ENCODE measurements at regions of chr7 and their contacts with region 1.

Region 1: DNA sequence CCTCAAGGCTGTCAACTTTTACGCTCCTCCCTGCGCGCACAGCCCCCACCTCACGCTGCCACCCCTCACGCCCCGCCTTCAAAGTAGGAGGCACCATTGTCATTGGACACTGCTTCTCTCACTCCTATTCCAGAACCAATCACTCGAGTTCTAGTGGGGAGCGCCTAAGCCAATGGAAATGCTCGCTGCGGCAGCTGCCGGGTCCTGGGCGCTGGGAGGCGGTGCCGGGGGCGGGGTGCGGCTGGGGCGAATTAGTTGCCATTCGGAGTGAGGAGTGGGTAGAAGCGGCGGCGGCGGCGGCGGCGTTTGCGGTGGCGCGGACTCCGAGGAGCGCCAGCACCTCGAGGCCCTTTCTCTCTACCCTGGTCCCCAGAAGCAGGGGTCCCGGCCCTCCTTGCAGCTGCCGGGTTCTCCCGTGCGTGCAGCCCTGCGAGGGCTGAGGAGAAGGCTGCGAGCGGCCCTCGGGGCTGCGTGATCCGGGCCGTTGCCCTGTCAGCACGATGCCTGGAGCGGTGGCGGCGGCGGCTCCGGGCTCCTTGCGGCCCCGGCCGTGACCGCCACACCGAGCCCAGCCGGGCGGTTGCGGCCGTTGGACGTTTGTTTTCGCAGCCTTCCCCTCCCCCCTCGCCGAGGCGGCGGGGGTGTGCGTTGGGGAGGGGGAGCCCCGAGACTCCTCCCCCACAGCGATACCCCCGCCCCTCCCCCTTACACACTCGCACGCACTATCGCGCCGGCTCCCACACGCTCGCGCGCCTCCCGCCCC is at the start of gene GLCCI1:
- DNase-seq: peak; percentile 96 to 98
- ATAC-seq: peak; percentile 98 to 99 (median 99)
- H3K4me3 ChIP-seq: peak within 1 kb of the TSS; percentile 57 to 100 (median 90)
- H3K27ac ChIP-seq: peak within 1 kb of the TSS; percentile 72 to 98 (median 92)
- H3K4me1 ChIP-seq: peaks cover 0 to 35% (median 13%) of the 10 kb centered on the region in 9 donors
- H3K27me3 ChIP-seq: no peaks in the 10 kb centered on the region
- CTCF ChIP-seq: no peak
- total RNA-seq, gene GLCCI1: 3.6 to 13.0 (median 7.6) TPM

Region 2: GRCh38 chr7:7566651-7567611 is 401.8 kb before region 1 on chr7 and contains the start of gene MIOS:
- intact Hi-C with region 1: loop called in 1 of 10 experiments (anchors 1 kb)
- DNase-seq: peak; percentile 87 to 92
- ATAC-seq: peak; percentile 95 to 98 (median 97)
- H3K4me3 ChIP-seq: peak within 1 kb of the TSS; percentile 63 to 97 (median 82)
- H3K27ac ChIP-seq: peak within 1 kb of the TSS; percentile 48 to 97 (median 94)
- H3K4me1 ChIP-seq: peaks cover 8 to 52% (median 19%) of the 10 kb centered on the region in 9 donors
- H3K27me3 ChIP-seq: no peaks in the 10 kb centered on the region
- CTCF ChIP-seq: peak in 1 of 9 donors; percentile 15
- total RNA-seq, gene MIOS: 15.7 to 28.8 (median 20.8) TPM

Region 3: DNA sequence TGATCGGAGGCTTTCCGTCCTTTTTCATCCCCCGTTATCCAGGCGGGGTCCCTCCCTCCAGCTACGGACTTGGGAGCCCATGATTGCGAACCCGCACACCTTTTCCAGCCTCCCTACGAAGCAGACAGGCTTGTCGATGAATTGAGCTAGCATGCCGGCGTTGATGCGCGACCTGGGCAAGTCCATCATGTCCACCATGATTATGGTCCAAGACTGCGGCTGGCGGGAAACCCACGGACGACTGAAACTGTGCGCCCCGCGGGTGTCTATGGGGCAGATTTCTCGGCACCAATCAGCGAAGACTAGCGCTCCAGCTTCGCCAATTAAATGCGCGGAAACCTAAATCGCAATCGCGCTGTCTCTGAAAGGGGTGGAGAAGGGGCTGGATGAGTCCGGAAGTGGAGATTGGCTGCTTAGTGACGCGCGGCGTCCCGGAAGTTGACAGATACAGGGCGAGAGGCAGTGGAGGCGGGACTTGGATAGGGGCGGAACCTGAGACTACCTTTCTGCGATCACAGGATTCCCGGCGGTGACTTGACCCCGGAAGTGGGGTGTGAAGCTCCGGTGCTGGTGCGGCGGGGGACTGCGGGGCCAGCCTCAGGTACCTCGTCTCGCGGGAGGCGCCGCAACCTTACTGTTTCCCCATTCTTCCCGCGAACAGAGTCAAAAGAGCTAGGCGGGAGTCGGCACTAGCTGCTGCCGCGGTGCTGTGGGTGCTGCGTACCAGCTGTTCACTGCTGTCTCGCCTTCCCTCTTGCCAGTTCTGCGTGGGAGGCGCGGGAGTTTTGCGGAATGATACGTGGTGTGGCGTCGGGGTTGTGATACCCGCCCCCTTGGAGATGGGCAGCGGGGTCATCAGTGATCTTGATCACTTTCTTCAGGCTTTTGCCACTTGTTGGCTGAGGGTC is 328.2 kb before region 1 on chr7 and contains the start of gene UMAD1:
- intact Hi-C with region 1: loop called in 1 of 10 experiments (anchors 5 kb)
- DNase-seq: peak; percentile 96 to 99
- ATAC-seq: peak; percentile 99 to 100 (median 100)
- H3K4me3 ChIP-seq: peak within 1 kb of the TSS; percentile 69 to 94 (median 78)
- H3K27ac ChIP-seq: peak within 1 kb of the TSS; percentile 55 to 94 (median 86)
- H3K4me1 ChIP-seq: peaks cover 2 to 28% (median 18%) of the 10 kb centered on the region in 9 donors
- H3K27me3 ChIP-seq: no peaks in the 10 kb centered on the region
- CTCF ChIP-seq: no peak
- total RNA-seq, gene UMAD1: 13.4 to 24.7 (median 18.0) TPM

Region 4: DNA sequence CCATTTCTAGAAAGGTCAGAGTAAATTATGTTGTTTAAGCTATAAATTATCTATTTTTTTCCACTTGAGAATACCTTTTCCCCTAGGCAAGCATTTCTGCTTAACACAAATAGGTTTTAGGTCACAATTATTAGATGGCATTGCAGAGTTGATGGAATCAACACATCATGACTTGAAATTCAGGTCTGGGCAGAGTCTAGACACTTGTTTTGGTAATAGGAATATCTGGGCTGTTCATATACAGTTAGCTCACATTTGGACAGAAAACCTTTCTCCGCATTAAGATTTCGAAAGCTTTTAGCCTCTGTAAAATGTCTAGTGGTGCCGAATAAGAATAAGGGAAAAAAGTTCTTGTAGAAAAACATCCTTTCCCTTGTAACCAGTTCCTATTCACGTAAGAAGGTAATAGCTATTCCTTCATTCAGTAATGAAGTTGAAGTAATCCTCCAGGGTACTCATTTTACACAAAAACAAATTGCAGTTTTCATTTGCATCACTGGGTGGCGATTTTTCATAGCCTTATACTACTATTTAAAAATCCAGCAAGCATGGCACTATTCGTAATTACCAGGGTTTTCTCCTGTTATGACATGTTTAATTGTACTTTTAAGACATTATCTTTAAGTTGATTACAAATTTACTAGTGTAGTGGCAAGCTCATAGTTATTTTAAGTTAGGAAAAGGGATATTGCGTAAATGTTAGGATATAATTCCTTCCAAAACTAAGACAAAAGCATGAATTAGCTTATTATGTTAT is 287.4 kb before region 1 on chr7:
- intact Hi-C with region 1: loop called in 1 of 10 experiments (anchors 10 kb)
- DNase-seq: peak in 1 of 2 donors; percentile 81
- ATAC-seq: peak in 7 of 8 donors; percentile 77 to 95 (median 91)
- H3K4me3 ChIP-seq: peak overlapping the region in 4 of 10 donors; percentile 6 to 13 (median 7)
- H3K27ac ChIP-seq: peak overlapping the region; percentile 7 to 77 (median 46)
- H3K4me1 ChIP-seq: peaks cover 0 to 35% (median 24%) of the 10 kb centered on the region in 9 donors
- H3K27me3 ChIP-seq: no peaks in the 10 kb centered on the region
- CTCF ChIP-seq: peak; percentile 56 to 85 (median 73)

Region 5: DNA sequence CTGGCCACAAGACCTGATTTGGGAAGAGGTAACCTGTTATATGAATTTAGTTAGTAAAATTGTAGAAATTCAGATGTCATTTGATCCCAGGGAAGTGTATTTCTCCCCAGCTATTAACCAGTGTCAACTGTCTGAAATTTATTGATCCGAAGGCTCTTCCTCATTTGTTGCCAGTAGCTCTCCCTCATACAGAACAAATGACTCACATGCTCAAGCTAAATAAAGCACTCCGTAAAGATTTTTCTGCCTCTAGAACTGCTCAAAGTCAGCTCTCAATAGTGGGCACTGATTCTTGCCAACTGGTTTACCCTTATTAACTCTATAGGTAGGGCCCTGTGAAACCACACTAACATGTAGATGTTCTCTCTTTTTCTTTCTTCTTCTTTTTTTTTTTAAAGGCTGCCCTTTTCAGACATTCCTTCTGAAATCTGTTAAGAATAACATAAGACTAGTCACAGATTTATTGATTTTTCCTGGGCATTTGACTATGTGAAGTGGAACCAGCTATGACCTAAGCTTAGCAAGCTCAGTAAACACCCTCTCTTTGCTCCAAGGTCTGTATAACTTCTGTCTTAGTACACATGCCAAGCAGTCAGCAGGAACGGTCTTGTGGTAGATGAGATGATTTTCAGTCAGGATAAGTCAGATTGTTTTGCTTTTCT is 272.1 kb before region 1 on chr7:
- intact Hi-C with region 1: loop called in 1 of 10 experiments (anchors 10 kb)
- DNase-seq: no peak
- ATAC-seq: peak in 4 of 8 donors; percentile 17 to 66 (median 54)
- H3K4me3 ChIP-seq: no peak overlapping the region
- H3K27ac ChIP-seq: peak overlapping the region in 9 of 10 donors; percentile 7 to 78 (median 53)
- H3K4me1 ChIP-seq: peaks cover 9 to 73% (median 50%) of the 10 kb centered on the region in 9 donors
- H3K27me3 ChIP-seq: no peaks in the 10 kb centered on the region
- CTCF ChIP-seq: no peak

Region 6: GRCh38 chr7:8201846-8202441 is 233.2 kb after region 1 on chr7:
- intact Hi-C with region 1: loop called in 1 of 10 experiments (anchors 10 kb)
- DNase-seq: no peak
- ATAC-seq: peak in 5 of 8 donors; percentile 42 to 81 (median 55)
- H3K4me3 ChIP-seq: no peak overlapping the region
- H3K27ac ChIP-seq: peak overlapping the region in 3 of 10 donors; percentile 15 to 29 (median 21)
- H3K4me1 ChIP-seq: peaks cover 0 to 29% (median 17%) of the 10 kb centered on the region in 9 donors
- H3K27me3 ChIP-seq: no peaks in the 10 kb centered on the region
- CTCF ChIP-seq: no peak

Measured in heart right ventricle (tissue), 16 donors.